Astrocyte of the spinal cord (primary cell): ENCODE measurements at regions of chr18 and their contacts with region 1.

Region 1: GRCh38 chr18:58768293-58768974 is 96.2 kb upstream of the ZNF532 start:
- DNase-seq: peak; percentile 48
- H3K4me3 ChIP-seq: peak overlapping the region; percentile 25
- CTCF ChIP-seq: peak; percentile 86

Region 2: GRCh38 chr18:58529714-58530354 is 238.6 kb before region 1 on chr18:
- in situ Hi-C with region 1: loop called (anchors 25 kb)
- DNase-seq: peak; percentile 65
- H3K4me3 ChIP-seq: no peak overlapping the region
- CTCF ChIP-seq: peak; percentile 78

Region 3: DNA sequence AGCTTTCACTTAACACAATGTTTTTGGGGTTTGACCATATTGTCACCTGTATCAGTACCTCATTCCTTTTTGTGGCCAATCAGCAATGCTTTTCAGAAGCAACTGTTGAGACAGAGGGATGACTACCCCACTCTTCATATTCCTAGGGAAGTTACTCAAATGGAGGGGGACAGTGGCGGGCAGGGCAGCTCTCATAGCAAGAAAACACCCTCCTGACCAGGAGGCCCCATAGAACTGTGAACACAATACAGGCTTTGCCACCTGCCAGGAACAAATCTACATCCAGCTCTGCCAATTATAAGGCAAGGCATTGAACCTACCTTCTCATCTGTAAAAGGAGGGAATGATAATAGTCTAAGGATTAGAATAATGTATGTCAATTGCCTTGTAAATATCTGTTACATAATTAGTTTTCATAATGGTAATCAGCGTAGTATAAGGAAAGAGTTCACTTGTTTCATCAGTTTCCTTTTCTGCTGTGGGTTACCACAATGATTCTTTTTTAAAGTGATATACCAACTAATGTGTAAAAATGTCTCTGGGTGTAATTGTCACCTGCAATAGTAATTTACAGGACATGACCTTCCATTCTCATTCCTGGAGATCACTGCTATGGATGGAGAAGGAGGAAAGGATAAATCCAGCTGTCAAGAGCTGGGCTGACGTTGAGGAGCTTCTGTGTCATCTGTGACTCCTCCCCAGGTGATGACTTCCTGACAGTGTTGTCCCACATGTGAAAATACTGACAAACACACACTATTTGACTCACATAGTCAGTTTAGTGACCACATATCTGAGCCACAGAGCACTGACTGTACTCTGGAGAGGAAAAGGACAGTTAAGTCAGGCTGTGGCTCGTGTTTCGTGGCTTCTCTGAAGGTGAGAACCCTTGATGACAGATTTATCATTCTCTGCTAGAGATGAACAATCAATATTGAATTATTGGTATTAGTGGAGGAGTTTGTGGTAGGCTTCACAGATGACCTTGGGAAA is 153.0 kb before region 1 on chr18:
- in situ Hi-C with region 1: no loop called
- DNase-seq: no peak
- H3K4me3 ChIP-seq: no peak overlapping the region
- CTCF ChIP-seq: no peak

Region 4: GRCh38 chr18:59072727-59073421 is 304.4 kb after region 1 on chr18:
- in situ Hi-C with region 1: no loop called
- DNase-seq: no peak
- H3K4me3 ChIP-seq: no peak overlapping the region
- CTCF ChIP-seq: no peak